GM10248 (cell line): ENCODE measurements at regions of chr2 and their contacts with region 1.

Region 1: DNA sequence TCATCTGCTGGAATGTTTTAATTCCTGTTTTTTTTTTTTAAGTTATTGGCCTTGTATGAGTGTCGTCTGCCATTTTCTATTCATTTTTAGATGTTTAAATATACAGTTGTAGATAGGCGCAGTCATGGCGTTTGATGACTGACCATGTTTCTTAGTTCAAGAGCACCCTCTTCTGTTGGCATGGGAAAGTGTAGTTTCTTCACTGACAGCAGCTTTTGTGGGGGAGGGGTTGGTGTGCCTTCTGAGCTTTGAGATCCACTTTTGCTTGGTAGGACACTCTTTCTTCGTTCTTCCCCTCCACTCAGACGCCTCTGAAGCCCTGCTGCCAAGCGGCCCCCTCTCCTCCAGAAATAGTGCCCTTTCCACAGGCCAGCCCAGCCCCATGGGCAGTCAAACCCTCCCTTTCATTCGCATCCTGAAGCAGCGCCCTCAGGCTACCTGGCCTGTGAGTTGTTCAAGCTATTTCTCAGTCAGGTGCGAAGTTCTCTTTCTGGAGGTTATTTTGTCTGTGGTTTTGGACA is 492.0 kb downstream of the TNS1 start:
- DNase-seq: peak; percentile 74
- CTCF ChIP-seq: peak; percentile 71

Region 2: DNA sequence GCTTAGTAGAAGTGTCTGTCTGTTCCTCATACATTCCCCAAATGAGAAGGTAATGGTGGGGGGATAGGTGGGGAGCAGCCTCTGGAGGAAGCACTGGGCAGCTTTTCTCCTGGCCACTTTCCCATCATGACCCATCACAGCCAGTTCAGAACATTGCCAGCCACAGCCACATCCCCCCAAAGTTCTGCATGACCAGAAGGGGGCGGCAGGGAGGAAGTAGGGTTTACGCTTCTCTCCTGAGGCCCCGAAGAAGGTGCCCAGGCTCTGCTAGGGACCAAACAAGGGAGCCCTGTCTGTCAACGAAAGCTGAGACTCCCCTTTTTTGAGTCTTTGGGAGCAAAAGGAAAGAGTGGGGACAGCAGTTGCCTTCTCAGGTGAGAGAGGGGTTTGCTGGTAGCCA is 823.2 kb before region 1 on chr2:
- CTCF ChIA-PET with region 1: interaction called, 29 read pairs
- POLR2A ChIA-PET with region 1: no interaction called
- DNase-seq: no peak
- CTCF ChIP-seq: peak; percentile 14

Region 3: DNA sequence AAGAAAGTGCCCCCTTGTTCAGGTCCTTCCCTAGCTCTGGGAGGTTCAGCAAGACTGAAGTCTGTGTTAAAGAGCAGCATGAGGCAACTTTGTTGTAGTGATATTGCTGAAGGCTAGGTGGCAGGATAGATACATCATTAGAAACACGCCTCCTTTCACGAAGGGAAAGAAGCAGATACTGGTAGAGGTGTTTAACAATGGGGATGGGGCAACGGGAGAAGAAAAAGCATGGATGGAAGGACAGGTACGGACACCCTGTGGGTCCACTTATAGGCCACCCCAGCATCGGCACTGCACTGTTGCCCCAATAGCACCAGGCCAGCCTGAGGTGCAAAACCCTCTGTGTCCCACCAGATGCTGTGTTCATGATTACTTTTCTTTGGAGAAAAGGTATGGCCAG is 811.9 kb before region 1 on chr2:
- CTCF ChIA-PET with region 1: interaction called, 11 read pairs
- POLR2A ChIA-PET with region 1: no interaction called
- DNase-seq: peak; percentile 55
- CTCF ChIP-seq: peak; percentile 69